ENCODE measurements at regions of chr4 and their contacts with region 1.

Region 1: DNA sequence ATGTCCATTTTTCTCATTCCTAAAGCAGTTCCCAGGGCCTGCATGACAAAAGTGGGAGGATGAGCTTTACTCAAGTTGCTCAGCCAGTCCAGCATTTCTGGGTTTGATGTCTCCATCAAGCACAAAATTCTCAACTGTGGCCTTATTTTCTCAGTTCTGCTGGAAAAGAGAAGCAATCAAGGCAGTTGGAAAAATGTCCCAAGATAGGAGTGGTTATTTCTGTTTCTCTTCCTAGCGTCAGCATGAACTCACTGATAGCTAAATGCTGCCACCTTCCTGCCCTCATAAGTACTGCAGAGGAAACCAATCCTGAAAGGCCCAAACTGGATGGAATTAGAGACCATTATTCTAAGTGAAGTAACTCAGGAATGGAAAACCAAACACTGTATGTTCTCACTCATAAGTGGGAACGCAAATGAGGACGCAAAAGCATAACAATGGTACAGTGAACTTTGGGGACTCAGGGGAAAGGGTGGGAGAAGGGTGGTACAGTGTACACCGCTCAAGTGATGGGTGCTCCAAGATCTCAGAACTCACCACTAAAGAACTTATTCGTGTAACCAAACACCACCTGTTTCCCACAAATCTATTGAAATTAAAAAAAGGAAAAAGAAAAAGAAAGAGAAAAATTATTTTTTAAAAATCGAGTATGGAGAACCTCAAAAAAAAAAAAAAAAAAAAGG is 29.6 kb downstream of the ADH7 start:
- DNase-seq: no peak
- H3K4me3 ChIP-seq: no peak overlapping the region
- CTCF ChIP-seq: peak; percentile 78

Region 2: DNA sequence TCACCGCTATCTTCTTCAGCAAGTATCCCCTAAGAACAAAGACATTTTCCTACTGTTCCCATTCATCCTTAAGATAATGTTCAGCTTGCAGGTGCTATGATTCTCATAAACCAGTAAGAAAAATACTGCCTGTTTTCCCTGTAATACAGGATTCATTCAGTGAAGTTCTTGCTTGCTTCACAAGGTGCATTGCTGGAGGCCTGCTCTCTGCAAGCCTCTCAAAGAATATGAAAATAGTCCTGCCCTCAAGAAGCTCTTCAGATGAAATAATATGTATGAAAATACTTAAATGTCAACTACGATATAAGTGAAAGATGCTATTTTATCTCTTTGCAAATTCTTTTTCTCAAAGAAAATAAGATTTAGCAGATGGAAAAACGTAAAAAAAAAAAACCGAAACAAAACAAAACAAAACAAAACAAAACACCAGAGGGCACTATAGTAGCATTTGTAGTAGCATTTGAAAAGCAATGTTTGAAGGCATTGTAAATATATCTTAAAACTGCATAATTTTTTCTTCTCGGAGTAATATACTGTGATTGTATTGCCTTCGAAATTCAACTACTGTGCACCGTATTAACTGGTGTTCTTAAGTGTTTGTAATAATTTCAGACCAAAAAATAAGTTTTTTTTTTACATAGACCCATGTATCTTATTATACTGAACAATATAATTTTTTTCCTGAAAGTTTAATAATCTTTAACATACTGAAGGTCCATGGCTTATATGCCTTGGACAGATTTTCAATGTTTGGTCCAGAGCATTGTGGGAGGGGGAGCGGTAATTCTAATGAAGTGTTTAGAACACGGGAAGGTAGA is 287.5 kb before region 1 on chr4:
- CTCF ChIA-PET with region 1: interaction called, 29 read pairs
- POLR2A ChIA-PET with region 1: no interaction called
- DNase-seq: no peak
- H3K4me3 ChIP-seq: no peak overlapping the region
- CTCF ChIP-seq: no peak

Region 3: GRCh38 chr4:99131378-99131777 is 274.2 kb before region 1 on chr4:
- CTCF ChIA-PET with region 1: interaction called, 11 read pairs
- POLR2A ChIA-PET with region 1: no interaction called
- DNase-seq: no peak
- H3K4me3 ChIP-seq: no peak overlapping the region
- CTCF ChIP-seq: no peak

Region 4: DNA sequence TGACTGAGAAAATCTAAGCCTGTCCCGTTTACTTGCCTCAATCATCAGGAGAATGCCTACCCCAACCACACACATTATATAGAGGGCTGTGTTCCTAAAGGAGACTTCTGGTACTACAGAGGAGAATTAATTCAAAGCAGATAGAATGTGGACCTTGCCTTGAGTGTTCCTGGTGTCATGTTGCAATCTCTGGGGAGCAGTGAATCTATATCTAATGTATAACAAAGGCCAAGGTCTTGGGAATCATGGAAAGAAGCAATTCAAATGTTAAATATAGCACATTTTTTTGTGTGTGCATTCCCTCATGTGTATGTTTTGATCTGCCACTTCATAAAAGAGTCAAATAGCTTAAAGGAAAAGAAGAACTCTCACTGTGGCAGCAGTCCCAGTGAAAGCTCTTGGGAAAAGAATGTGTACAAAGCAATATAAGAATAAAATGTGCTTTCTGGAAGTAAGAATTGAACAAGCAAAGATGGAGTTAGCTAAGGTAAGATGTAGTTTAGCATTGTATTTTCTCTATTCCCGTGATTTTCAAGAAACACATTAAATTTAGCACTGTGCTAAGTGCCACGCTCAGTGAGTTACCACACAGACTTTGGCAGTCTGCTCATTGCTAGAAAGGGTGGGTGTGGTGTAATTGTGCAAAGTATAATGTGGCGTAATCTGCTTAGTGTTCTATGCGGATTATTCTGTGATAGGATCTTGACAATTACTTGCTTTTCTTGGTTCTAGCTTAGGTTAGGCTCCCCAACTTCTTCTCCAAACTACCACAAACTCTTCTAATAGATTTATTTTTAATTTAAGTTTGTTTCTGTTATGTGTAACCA is 200.2 kb before region 1 on chr4:
- CTCF ChIA-PET with region 1: interaction called, 139 read pairs
- POLR2A ChIA-PET with region 1: no interaction called
- DNase-seq: no peak
- H3K4me3 ChIP-seq: no peak overlapping the region
- CTCF ChIP-seq: no peak

Region 5: DNA sequence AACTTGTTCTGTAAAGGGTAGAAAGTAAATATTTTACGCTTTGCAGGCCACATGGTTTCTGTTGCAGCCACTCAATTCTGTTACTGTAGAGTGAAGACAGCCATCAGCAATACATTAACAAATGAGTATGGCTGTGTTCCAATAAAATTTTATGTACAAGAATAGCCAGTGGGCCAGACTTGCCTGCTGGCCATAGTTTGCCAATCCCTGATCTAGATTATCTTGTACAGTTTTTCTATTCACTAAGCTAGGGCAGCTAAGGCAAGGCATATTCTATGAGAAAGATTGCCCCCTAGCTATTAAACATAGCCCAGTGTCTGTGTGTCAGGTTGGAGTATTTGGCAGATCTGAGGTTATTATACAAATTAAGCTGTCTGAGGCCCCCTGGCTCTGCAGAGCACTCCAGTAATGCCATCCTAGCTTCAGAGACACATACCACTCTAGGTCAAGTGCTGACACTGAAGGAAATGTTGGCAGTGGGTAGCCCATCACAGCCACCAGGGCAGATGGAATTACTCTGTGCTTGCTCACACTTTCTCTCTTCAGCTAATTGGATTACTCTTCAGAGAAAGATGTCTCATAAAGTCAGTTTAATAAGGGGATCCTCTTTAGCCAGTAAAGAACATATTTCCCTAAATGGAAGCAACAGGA is 209.7 kb after region 1 on chr4:
- CTCF ChIA-PET with region 1: no interaction called
- POLR2A ChIA-PET with region 1: no interaction called
- DNase-seq: no peak
- H3K4me3 ChIP-seq: no peak overlapping the region
- CTCF ChIP-seq: no peak

Region 6: DNA sequence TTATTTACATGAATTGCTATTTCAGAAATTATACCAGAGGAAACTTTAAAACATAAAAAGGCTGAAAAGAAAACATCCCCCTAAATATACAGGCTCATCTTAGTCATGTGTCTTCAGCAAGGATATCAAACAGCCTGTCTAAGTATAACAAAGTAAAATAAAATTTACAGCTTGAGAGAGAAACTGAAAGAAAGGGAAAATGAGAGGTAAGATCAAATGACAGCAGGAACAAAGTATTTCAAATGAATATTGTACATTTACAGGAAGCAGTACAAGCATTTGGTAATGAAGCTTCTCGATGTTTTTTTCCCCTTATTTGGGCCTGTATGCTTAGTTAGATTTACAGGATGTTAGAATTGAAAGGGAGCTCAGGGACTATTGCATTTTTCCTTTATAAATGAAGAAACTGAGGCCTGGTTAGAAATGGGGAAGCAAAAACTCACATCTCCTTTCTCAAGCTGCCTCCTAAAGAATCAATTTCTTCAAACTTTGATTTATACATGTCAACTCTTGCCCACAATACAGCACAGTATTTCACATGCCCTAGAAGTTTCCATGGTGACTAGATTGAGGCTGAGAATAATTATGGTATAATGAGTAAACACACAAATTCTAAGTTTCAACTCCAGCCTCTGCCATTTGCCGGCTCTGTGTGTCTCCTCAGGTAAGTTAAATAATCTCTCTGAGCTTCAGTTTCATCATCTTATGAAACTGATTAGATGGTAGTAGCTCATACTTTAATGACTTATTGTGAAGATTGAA is 440.3 kb after region 1 on chr4:
- CTCF ChIA-PET with region 1: no interaction called
- POLR2A ChIA-PET with region 1: no interaction called
- DNase-seq: no peak
- H3K4me3 ChIP-seq: no peak overlapping the region
- CTCF ChIP-seq: no peak

Region 7: DNA sequence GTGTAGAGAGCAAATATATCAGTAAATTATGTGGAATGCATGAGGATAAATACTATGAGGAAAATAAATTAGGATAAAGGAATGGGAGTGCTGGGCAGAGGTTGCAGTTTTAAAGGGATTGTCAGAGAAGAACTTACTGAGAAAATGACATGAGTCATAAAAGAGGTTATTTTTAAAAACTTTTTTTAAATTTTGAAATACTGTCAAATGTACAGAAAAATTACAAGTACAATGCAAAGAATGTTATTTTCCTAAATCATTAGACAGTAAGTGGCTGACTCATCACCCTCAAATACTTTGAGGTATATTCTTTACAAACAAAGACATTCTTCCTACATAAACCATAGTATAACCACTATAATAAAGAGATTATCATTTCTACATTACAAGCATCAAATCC is 574.3 kb after region 1 on chr4:
- CTCF ChIA-PET with region 1: no interaction called
- POLR2A ChIA-PET with region 1: no interaction called
- DNase-seq: peak; percentile 33
- H3K4me3 ChIP-seq: no peak overlapping the region
- CTCF ChIP-seq: no peak